T-cell (primary cell): ENCODE measurements at regions of chr2 and their contacts with region 1.

Region 1: DNA sequence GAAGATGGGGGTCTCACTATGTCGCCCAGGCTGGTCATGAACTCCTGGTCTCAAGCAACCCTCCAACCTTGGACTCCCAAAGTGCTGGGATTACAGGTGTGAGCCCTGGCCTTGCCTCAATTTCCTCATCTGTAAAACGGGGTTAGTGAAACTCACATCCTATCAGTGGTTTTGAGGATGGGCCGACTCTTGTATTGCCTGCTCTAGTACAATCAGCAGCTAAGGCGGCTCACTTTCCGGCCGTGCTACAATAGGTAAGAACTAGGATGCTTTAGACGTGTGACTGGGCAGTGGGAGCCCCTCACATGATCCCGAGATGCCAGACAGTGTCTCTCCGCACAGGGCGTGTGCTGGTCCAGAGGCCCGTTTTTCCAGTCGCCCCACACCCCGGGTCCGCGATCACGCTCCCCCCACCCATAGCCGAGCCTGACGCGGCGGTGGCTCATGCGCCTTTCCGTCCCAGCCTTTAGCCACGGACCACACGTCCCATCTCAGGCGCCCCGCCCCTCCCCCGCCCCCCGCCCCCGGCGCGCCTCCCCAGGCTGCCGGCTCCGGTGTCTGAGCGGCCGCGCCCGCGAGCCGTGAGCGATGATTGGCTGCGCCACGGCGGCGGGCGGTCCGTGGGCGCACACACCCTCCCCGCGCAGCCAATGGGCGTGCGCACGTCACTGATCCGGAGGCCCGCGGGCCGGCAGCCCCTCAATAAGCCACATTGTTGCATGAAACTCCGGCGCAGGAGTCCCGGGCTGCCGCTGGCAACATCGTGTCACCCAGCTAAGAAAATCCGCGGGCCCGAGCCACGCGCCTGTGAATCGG is at the start of gene HK2:
- DNase-seq: peak; percentile 40 to 85 (median 68)
- ATAC-seq: peak; percentile 88 to 90 (median 90)
- H3K4me3 ChIP-seq: peak within 1 kb of the TSS; percentile 67 to 80
- H3K4me3 Mint-ChIP-seq: peak within 1 kb of the TSS; percentile 84 to 91 (median 90)
- H3K27ac ChIP-seq: no peak within 1 kb of the TSS
- H3K27ac Mint-ChIP-seq: peak within 1 kb of the TSS; percentile 73 to 86
- H3K4me1 ChIP-seq: peaks cover 10 to 36% of the 10 kb centered on the region in 2 experiments
- H3K4me1 Mint-ChIP-seq: peaks cover 32 to 36% (median 32%) of the 10 kb centered on the region in 3 donors
- H3K27me3 ChIP-seq: peaks cover 0 to 19% of the 10 kb centered on the region in 2 experiments
- H3K27me3 Mint-ChIP-seq: no peaks in the 10 kb centered on the region
- total RNA-seq, gene HK2: 8.6 to 14.4 (median 10.6) TPM

Region 2: GRCh38 chr2:74849228-74849892 is 15.7 kb after region 1 on chr2:
- CTCF ChIA-PET with region 1: interaction called, 4 to 25 read pairs
- POLR2A ChIA-PET with region 1: interaction called, 4 to 12 read pairs
- DNase-seq: peak in 34 of 35 experiments; percentile 22 to 74 (median 44)
- ATAC-seq: peak; percentile 82 to 92 (median 86)
- H3K4me3 ChIP-seq: peak overlapping the region; percentile 20 to 27
- H3K4me3 Mint-ChIP-seq: peak overlapping the region; percentile 70 to 80 (median 77)
- H3K27ac ChIP-seq: peak overlapping the region; percentile 89
- H3K27ac Mint-ChIP-seq: peak overlapping the region; percentile 98 to 99
- H3K4me1 ChIP-seq: peaks cover 61% of the 10 kb centered on the region in 2 experiments
- H3K4me1 Mint-ChIP-seq: peaks cover 74 to 85% (median 81%) of the 10 kb centered on the region in 3 donors
- H3K27me3 ChIP-seq: peaks cover 0 to 4% of the 10 kb centered on the region in 2 experiments
- H3K27me3 Mint-ChIP-seq: no peaks in the 10 kb centered on the region